ENCODE measurements at regions of chr7 and their contacts with region 1.

Region 1: DNA sequence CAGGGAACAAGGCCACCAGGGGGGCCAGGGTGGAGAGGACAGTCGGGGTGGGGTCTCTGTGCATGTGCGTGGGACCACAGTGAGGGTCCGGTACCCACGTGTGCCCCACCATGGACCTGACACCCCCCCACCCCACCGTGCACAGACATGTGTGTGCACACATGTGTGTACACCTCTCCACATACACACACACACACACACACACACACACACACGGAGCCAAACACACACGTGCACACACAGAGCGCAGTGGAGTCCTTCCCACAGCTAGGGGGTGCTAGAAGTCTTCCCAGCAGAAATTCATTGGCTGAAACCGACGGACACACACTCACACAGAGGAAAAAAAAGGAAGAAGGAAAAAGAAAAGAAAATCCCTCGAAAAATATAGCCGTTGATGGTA is 42.8 kb upstream of the GNA12 start:
- DNase-seq: peak; percentile 85
- H3K4me3 Mint-ChIP-seq: peak overlapping the region; percentile 36
- H3K27ac Mint-ChIP-seq: peak overlapping the region; percentile 11
- H3K4me1 Mint-ChIP-seq: peaks cover 18% of the 10 kb centered on the region
- H3K27me3 Mint-ChIP-seq: no peaks in the 10 kb centered on the region
- CTCF ChIP-seq: peak; percentile 93

Region 2: GRCh38 chr7:2670720-2671391 is 216.0 kb before region 1 on chr7:
- CTCF ChIA-PET with region 1: no interaction called
- intact Hi-C with region 1: no loop called
- DNase-seq: peak; percentile 90
- H3K4me3 Mint-ChIP-seq: peak overlapping the region; percentile 6
- H3K27ac Mint-ChIP-seq: no peak overlapping the region
- H3K4me1 Mint-ChIP-seq: peaks cover 33% of the 10 kb centered on the region
- H3K27me3 Mint-ChIP-seq: peaks cover 54% of the 10 kb centered on the region
- CTCF ChIP-seq: peak; percentile 97

Region 3: DNA sequence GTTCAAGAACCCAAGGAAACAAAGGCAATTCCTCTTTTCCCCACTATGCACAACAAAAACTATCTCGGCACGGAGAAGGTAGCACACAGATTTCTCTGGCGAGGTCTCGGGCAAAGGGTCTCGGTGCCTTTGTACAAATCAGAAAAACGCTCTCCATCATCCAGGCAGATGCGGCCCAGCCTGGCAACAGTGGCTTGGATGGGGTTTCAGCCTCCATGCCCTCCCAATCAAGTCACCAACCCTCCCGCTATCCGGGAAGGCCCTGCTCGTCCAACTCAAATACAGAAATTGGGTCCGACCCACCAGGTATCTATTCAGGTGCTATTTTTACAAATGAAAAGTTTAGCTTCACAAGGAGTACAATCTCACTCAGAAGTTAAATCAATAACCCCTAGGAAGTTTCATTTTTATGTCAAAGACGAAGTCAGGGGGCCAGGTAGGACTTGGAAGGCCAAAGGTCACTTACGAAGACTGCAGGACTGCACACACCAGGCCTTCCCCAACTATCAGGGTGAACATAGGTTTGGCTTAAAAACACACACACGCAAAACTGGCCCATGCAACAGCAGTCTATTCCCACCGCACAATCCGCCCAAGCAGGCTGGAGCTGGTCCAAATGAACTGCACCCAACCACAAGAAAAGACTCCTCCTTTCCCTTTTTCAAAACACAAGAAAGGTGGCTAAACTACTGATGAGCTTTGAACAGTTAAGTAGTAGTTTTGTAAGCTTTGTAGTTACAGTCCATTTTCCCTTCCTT is 85.8 kb before region 1 on chr7:
- CTCF ChIA-PET with region 1: no interaction called
- intact Hi-C with region 1: no loop called
- DNase-seq: peak; percentile 50
- H3K4me3 Mint-ChIP-seq: peak overlapping the region; percentile 19
- H3K27ac Mint-ChIP-seq: peak overlapping the region; percentile 41
- H3K4me1 Mint-ChIP-seq: peaks cover 58% of the 10 kb centered on the region
- H3K27me3 Mint-ChIP-seq: no peaks in the 10 kb centered on the region
- CTCF ChIP-seq: no peak

Region 4: DNA sequence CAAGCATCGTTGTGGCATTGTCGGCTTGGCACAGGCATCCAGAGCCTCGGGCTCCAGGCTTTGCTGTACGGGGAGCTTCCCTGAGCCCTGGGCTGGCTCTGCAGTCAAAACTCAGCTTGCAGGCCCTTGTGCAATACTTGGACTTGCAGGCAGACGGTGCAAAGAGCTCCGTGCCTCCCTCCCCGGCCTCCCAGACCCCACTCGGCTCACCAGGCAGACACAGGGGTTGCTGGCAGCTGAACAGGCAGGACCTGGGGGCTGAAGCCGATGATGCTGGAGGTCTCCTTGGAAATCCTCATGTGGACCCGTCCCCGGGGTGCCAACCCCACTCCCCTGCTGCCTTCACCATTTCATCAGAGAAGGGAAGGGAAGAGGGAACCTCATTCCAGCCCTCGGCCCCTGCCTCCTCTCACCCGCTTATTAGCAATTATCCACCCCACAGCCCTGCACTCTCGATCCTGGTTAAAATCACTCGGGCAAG is 16.8 kb after region 1 on chr7:
- CTCF ChIA-PET with region 1: no interaction called
- intact Hi-C with region 1: no loop called
- DNase-seq: no peak
- H3K4me3 Mint-ChIP-seq: no peak overlapping the region
- H3K27ac Mint-ChIP-seq: no peak overlapping the region
- H3K4me1 Mint-ChIP-seq: no peaks in the 10 kb centered on the region
- H3K27me3 Mint-ChIP-seq: no peaks in the 10 kb centered on the region
- CTCF ChIP-seq: no peak

Region 5: GRCh38 chr7:2956526-2957368 is 69.8 kb after region 1 on chr7:
- CTCF ChIA-PET with region 1: no interaction called
- intact Hi-C with region 1: no loop called
- DNase-seq: peak; percentile 30
- H3K4me3 Mint-ChIP-seq: no peak overlapping the region
- H3K27ac Mint-ChIP-seq: no peak overlapping the region
- H3K4me1 Mint-ChIP-seq: peaks cover 5% of the 10 kb centered on the region
- H3K27me3 Mint-ChIP-seq: no peaks in the 10 kb centered on the region
- CTCF ChIP-seq: no peak

Region 6: DNA sequence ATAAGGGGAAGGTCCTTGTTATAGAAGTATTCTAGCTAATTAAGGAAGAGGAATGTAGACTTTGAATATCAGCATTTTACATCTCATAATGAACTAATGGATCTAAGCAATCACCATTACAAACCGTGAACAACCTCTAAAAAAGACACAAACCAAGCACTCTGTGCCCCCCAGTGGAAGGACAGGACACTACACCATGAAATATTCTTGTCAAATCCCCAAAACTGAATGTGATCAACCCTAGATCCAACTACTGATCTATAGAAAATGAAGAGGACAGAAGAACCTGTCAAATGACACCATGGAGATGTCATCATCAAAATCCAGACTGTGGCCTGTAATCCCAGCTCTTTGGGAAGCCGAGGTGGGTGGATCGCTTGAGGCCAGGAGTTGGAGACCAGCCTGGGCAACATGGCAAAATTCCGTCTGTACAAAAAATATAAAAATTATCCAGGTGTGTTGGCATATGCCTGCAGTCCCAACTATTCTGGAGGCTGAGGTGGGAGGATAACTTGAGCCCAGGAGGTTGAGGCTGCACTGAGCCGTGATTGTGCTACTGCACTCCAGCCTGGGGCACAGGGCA is 268.1 kb after region 1 on chr7:
- CTCF ChIA-PET with region 1: interaction called, 3 read pairs
- intact Hi-C with region 1: loop called (anchors 2 kb)
- DNase-seq: peak; percentile 69
- H3K4me3 Mint-ChIP-seq: no peak overlapping the region
- H3K27ac Mint-ChIP-seq: no peak overlapping the region
- H3K4me1 Mint-ChIP-seq: peaks cover 22% of the 10 kb centered on the region
- H3K27me3 Mint-ChIP-seq: no peaks in the 10 kb centered on the region
- CTCF ChIP-seq: peak; percentile 88

Region 7: DNA sequence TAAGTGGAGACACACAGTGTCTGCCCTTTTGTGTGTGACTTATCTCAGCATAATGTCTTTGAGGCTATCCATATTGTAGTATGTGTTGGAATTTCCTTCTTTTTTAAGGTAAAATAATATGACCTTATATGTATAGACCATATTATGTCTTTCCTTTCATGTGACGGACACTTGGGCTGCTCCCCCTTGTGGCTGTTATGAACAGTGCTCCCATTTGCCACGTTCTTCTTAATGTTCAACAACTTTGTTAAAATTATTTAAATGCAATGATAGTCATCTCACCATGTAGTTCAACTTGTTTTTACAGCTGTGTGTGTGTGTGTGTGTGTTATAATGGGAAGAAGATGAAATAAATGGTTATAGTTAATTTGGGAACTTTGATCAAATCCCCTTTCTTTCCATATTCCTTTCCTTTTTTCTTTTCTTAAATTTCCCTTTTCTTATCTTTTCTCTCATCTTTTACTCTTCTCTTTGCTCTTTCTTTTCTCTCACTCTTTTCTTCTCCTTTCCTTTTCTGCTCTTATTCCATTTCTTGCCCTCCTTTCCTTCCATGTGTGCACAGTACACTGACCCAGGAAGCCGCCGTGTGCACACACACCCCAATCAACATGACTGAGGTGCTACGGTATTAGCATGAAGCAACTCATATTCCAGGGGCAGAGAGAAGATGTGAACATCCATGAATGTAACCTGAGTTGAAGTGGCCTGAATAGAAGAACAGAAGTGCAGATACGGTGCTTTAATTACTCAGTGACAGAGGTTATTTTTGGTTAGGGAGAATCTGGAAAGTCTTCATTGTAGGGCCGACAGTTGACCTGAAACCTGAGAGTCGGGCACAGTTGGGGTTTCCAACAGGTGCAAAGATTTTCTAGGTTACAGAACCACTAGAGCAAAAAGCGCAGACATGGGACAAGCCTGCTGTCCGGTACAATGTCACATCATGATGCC is 1010.8 kb after region 1 on chr7:
- CTCF ChIA-PET with region 1: no interaction called
- intact Hi-C with region 1: loop called (anchors 5 kb)
- DNase-seq: peak; percentile 63
- H3K4me3 Mint-ChIP-seq: no peak overlapping the region
- H3K27ac Mint-ChIP-seq: no peak overlapping the region
- H3K4me1 Mint-ChIP-seq: peaks cover 31% of the 10 kb centered on the region
- H3K27me3 Mint-ChIP-seq: no peaks in the 10 kb centered on the region
- CTCF ChIP-seq: peak; percentile 85

Measured in Calu3 (cell line).